ENCODE measurements at regions of chr1 and their contacts with region 1.

Region 1: GRCh38 chr1:107529502-107530149 is 388.8 kb downstream of the NTNG1 start:
- DNase-seq: no peak
- H3K4me3 ChIP-seq: no peak overlapping the region
- H3K27ac ChIP-seq: peak overlapping the region in 3 of 4 donors; percentile 53 to 61 (median 59)
- H3K4me1 ChIP-seq: peaks cover 0 to 31% (median 13%) of the 10 kb centered on the region in 4 donors
- H3K27me3 ChIP-seq: no peaks in the 10 kb centered on the region
- CTCF ChIP-seq: peak in 3 of 4 experiments; percentile 67 to 84 (median 70)
- EP300 ChIP-seq: no peak
- POLR2A ChIP-seq: no peak

Region 2: DNA sequence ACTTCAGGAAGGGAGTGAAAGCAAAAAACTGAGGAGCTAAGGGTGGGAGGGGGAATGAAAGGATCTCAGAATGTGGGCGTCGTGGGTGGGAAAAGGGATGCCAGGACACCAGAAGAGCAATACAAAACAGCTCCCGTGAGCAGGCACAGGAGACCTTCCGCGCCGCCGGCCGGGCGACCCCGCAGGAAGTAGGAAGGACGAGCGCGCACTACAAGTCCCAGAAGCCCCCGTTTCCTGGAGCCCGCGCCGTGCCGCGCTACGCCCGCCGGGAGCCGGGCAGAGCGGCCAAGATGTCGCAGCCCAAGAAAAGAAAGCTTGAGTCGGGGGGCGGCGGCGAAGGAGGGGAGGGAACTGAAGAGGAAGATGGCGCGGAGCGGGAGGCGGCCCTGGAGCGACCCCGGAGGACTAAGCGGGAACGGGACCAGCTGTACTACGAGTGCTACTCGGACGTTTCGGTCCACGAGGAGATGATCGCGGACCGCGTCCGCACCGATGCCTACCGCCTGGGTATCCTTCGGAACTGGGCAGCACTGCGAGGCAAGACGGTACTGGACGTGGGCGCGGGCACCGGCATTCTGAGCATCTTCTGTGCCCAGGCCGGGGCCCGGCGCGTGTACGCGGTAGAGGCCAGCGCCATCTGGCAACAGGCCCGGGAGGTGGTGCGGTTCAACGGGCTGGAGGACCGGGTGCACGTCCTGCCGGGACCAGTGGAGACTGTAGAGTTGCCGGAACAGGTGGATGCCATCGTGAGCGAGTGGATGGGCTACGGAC is 473.0 kb before region 1 on chr1 and contains the start of gene PRMT6:
- intact Hi-C with region 1: loop called (anchors 10 kb)
- DNase-seq: peak; percentile 92
- H3K4me3 ChIP-seq: peak within 1 kb of the TSS; percentile 62 to 90 (median 80)
- H3K27ac ChIP-seq: peak within 1 kb of the TSS; percentile 83 to 93 (median 91)
- H3K4me1 ChIP-seq: peaks cover 0 to 24% (median 13%) of the 10 kb centered on the region in 4 donors
- H3K27me3 ChIP-seq: no peaks in the 10 kb centered on the region
- CTCF ChIP-seq: no peak
- EP300 ChIP-seq: no peak
- POLR2A ChIP-seq: peak; percentile 48 to 64
- total RNA-seq, gene PRMT6: 6.1 to 15.6 (median 11.9) TPM

Region 3: GRCh38 chr1:107142140-107142542 is 387.5 kb before region 1 on chr1:
- intact Hi-C with region 1: loop called (anchors 5 kb)
- DNase-seq: no peak
- H3K4me3 ChIP-seq: peak overlapping the region; percentile 58 to 73 (median 68)
- H3K27ac ChIP-seq: peak overlapping the region in 2 of 4 donors; percentile 49 to 73
- H3K4me1 ChIP-seq: peaks cover 0 to 21% (median 15%) of the 10 kb centered on the region in 4 donors
- H3K27me3 ChIP-seq: no peaks in the 10 kb centered on the region
- CTCF ChIP-seq: peak; percentile 20 to 71 (median 38)
- EP300 ChIP-seq: no peak
- POLR2A ChIP-seq: no peak

Region 4: DNA sequence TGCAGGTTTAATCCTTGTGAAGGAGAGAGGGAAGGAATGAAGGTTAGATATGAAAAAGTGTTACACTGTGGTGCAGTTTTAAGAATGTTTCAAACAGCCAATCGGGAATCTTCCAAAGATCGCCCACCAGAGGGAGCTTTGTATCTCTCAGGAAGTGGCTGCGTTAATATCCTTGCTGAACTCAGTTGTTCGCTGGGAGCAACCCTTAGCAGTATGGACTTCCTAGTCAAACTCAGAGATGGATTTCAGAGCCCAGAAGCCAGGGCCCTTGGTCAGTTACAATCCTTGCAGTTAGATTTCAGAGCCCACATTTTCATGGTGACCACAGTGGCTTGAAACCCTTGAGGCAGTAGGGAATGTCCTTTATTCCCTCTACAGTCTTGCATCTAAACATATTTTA is 252.6 kb before region 1 on chr1:
- intact Hi-C with region 1: loop called (anchors 10 kb)
- DNase-seq: peak; percentile 60
- H3K4me3 ChIP-seq: no peak overlapping the region
- H3K27ac ChIP-seq: no peak overlapping the region
- H3K4me1 ChIP-seq: no peaks in the 10 kb centered on the region
- H3K27me3 ChIP-seq: no peaks in the 10 kb centered on the region
- CTCF ChIP-seq: peak; percentile 8 to 35 (median 24)
- EP300 ChIP-seq: no peak
- POLR2A ChIP-seq: no peak

Region 5: GRCh38 chr1:107626073-107626833 is 96.6 kb after region 1 on chr1:
- intact Hi-C with region 1: no loop called
- DNase-seq: no peak
- H3K4me3 ChIP-seq: no peak overlapping the region
- H3K27ac ChIP-seq: peak overlapping the region in 2 of 4 donors; percentile 35 to 36
- H3K4me1 ChIP-seq: peaks cover 0 to 19% (median 12%) of the 10 kb centered on the region in 4 donors
- H3K27me3 ChIP-seq: no peaks in the 10 kb centered on the region
- CTCF ChIP-seq: no peak
- EP300 ChIP-seq: no peak
- POLR2A ChIP-seq: no peak

Region 6: DNA sequence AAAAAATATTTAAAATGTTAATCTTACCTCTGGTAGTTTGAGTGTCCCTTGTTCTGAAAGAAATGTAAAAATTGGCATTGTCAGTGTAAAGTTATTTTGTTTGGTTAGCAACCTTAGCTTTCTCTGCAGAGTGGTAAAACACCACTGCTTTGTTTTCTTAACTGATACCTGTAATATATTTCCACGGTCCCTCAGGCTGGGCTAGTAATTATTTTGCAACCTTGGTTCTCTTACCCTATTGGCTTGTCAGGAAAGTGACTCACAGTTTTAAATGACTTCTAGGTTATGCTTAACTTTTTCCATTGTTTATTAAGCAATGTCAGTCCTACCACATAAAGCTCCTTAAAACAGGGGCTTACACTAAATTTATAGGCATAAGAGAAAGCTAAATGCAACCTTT is 158.7 kb after region 1 on chr1:
- intact Hi-C with region 1: loop called (anchors 5 kb)
- DNase-seq: no peak
- H3K4me3 ChIP-seq: no peak overlapping the region
- H3K27ac ChIP-seq: peak overlapping the region; percentile 52 to 66 (median 58)
- H3K4me1 ChIP-seq: peaks cover 0 to 74% (median 42%) of the 10 kb centered on the region in 4 donors
- H3K27me3 ChIP-seq: no peaks in the 10 kb centered on the region
- CTCF ChIP-seq: no peak
- EP300 ChIP-seq: no peak
- POLR2A ChIP-seq: peak in 1 of 2 donors; percentile 39

Measured in sigmoid colon (tissue), 7 donors.